Activated CD4-positive, alpha-beta memory T cell treated with anti-CD3 and anti-CD28 coated beads for 36 hours (primary cell): ENCODE measurements at regions of chr4 and their contacts with region 1.

Region 1: GRCh38 chr4:152100379-152101201 is 339.8 kb upstream of the GATB start:
- DNase-seq: peak; percentile 89
- H3K4me3 Mint-ChIP-seq: peak overlapping the region; percentile 72
- H3K27ac Mint-ChIP-seq: peak overlapping the region; percentile 97
- H3K4me1 Mint-ChIP-seq: peaks cover 88% of the 10 kb centered on the region
- H3K27me3 Mint-ChIP-seq: no peaks in the 10 kb centered on the region

Region 2: GRCh38 chr4:152079543-152080293 is 20.9 kb before region 1 on chr4:
- CTCF ChIA-PET with region 1: no interaction called
- POLR2A ChIA-PET with region 1: no interaction called
- intact Hi-C with region 1: loop called (anchors 1 kb)
- DNase-seq: peak; percentile 71
- H3K4me3 Mint-ChIP-seq: peak overlapping the region; percentile 24
- H3K27ac Mint-ChIP-seq: peak overlapping the region; percentile 78
- H3K4me1 Mint-ChIP-seq: peaks cover 54% of the 10 kb centered on the region
- H3K27me3 Mint-ChIP-seq: no peaks in the 10 kb centered on the region

Region 3: GRCh38 chr4:152115794-152116193 is 15.2 kb after region 1 on chr4:
- CTCF ChIA-PET with region 1: no interaction called
- POLR2A ChIA-PET with region 1: interaction called, 6 read pairs
- intact Hi-C with region 1: loop called (anchors 1 kb)
- DNase-seq: peak; percentile 60
- H3K4me3 Mint-ChIP-seq: peak overlapping the region; percentile 30
- H3K27ac Mint-ChIP-seq: peak overlapping the region; percentile 70
- H3K4me1 Mint-ChIP-seq: peaks cover 40% of the 10 kb centered on the region
- H3K27me3 Mint-ChIP-seq: no peaks in the 10 kb centered on the region

Region 4: GRCh38 chr4:152166567-152166966 is 66.0 kb after region 1 on chr4:
- CTCF ChIA-PET with region 1: no interaction called
- POLR2A ChIA-PET with region 1: no interaction called
- intact Hi-C with region 1: no loop called
- DNase-seq: no peak
- H3K4me3 Mint-ChIP-seq: no peak overlapping the region
- H3K27ac Mint-ChIP-seq: no peak overlapping the region
- H3K4me1 Mint-ChIP-seq: no peaks in the 10 kb centered on the region
- H3K27me3 Mint-ChIP-seq: peaks cover 4% of the 10 kb centered on the region

Region 5: GRCh38 chr4:152181150-152181549 is 80.6 kb after region 1 on chr4:
- CTCF ChIA-PET with region 1: no interaction called
- POLR2A ChIA-PET with region 1: no interaction called
- intact Hi-C with region 1: loop called (anchors 5 kb)
- DNase-seq: no peak
- H3K4me3 Mint-ChIP-seq: no peak overlapping the region
- H3K27ac Mint-ChIP-seq: no peak overlapping the region
- H3K4me1 Mint-ChIP-seq: peaks cover 19% of the 10 kb centered on the region
- H3K27me3 Mint-ChIP-seq: no peaks in the 10 kb centered on the region

Region 6: GRCh38 chr4:152369902-152370295 is 269.3 kb after region 1 on chr4:
- CTCF ChIA-PET with region 1: no interaction called
- POLR2A ChIA-PET with region 1: no interaction called
- intact Hi-C with region 1: loop called (anchors 5 kb)
- DNase-seq: no peak
- H3K4me3 Mint-ChIP-seq: no peak overlapping the region
- H3K27ac Mint-ChIP-seq: no peak overlapping the region
- H3K4me1 Mint-ChIP-seq: peaks cover 29% of the 10 kb centered on the region
- H3K27me3 Mint-ChIP-seq: no peaks in the 10 kb centered on the region